ENCODE measurements at regions of chr18 and their contacts with region 1.

Region 1: GRCh38 chr18:12659904-12660605 is 2.1 kb upstream of the SPIRE1 start:
- DNase-seq: peak; percentile 47
- H3K4me3 ChIP-seq: no peak overlapping the region
- H3K27ac ChIP-seq: no peak overlapping the region
- H3K4me1 ChIP-seq: peaks cover 3% of the 10 kb centered on the region
- CTCF ChIP-seq: peak; percentile 95

Region 2: GRCh38 chr18:12543697-12544096 is 116.4 kb before region 1 on chr18:
- CTCF ChIA-PET with region 1: no interaction called
- POLR2A ChIA-PET with region 1: no interaction called
- intact Hi-C with region 1: loop called (anchors 2 kb)
- DNase-seq: no peak
- H3K4me3 ChIP-seq: no peak overlapping the region
- H3K27ac ChIP-seq: no peak overlapping the region
- H3K4me1 ChIP-seq: no peaks in the 10 kb centered on the region
- CTCF ChIP-seq: no peak

Region 3: DNA sequence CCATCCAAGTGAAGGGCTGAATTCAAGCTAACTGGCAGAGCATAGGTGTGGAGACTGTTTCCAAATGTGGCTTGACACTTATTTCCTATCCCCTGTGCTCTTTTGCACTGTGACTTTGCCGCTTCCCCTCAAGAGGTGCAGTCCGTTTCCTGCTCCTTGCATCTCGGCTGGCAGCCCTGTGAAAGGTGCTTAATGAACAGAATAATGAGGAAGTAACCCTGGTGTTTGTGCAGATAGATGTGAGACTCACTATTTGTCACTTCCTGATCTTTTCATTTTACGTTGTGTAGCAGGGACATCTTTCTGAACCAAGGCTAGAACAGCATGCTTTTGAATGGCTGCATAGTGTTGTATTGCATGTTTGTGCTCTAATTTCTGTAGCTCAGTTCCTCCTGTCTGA is 391.9 kb after region 1 on chr18:
- CTCF ChIA-PET with region 1: no interaction called
- POLR2A ChIA-PET with region 1: no interaction called
- intact Hi-C with region 1: no loop called
- DNase-seq: peak; percentile 75
- H3K4me3 ChIP-seq: no peak overlapping the region
- H3K27ac ChIP-seq: peak overlapping the region; percentile 33
- H3K4me1 ChIP-seq: peaks cover 15% of the 10 kb centered on the region
- CTCF ChIP-seq: no peak

Measured in OCI-LY7 (cell line).